ENCODE measurements at regions of chr16 and their contacts with region 1.

Region 1: GRCh38 chr16:3029537-3030402 is 5.9 kb downstream of the THOC6 start:
- DNase-seq: no peak
- ATAC-seq: no peak
- H3K4me3 Mint-ChIP-seq: no peak overlapping the region
- H3K27ac Mint-ChIP-seq: no peak overlapping the region
- H3K4me1 Mint-ChIP-seq: peaks cover 22% of the 10 kb centered on the region
- H3K27me3 Mint-ChIP-seq: no peaks in the 10 kb centered on the region
- CTCF ChIP-seq: no peak

Region 2: DNA sequence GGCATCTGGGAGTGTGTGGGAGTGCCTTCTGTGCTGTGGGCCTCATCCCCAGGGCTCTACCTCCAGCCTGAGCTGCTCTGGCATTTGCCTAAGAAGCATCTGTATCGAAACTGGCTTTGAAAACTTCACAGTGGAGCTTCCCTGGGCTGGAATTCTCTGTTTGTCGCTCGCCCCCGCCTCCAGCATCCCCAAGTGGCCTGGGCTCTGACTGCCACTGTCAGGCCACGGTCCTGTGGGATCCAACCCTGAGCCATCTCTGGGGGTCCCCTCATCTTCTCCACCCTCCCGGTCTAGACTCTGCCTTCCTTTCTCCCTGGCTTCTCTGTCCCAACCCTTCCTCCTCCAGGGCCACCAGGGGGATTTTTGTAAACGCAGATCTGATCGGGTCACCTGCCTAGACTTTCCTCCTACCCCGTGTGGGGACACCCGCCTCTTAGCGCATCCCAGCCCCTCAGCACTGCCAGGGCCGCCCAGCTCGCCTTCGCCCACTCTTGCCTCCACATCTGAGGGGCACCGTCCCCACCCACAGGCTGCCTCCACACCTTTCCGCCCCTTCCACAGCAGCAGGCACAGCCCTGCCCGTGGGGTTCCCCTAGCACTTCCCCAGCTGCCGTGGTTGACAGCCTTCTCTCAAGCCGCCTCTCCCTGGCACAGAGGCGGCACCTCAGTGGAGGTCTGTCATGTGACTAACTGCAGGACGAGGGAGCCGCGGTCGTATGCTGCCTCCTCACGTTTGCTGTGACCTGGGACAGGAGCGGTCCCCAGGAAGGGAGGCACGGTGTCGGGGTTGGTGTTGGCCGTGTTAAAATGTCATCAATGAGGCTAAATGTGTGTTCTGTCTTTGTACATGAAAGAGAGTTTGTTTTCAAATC is 542.9 kb before region 1 on chr16:
- CTCF ChIA-PET with region 1: no interaction called
- POLR2A ChIA-PET with region 1: no interaction called
- DNase-seq: no peak
- ATAC-seq: peak; percentile 15; the same call in 1 of the 2 replicates
- H3K4me3 Mint-ChIP-seq: no peak overlapping the region
- H3K27ac Mint-ChIP-seq: peak overlapping the region; percentile 54
- H3K4me1 Mint-ChIP-seq: 0 out of 2 replicates have a peak, but pooled peaks cover 4% of the 10 kb centered on the region
- H3K27me3 Mint-ChIP-seq: no peaks in the 10 kb centered on the region; the same call in 1 of the 2 replicates
- CTCF ChIP-seq: no peak

Region 3: GRCh38 chr16:2829501-2830356 is 200.0 kb before region 1 on chr16 and contains the start of gene ZG16B:
- CTCF ChIA-PET with region 1: no interaction called
- POLR2A ChIA-PET with region 1: no interaction called
- DNase-seq: no peak
- ATAC-seq: no peak
- H3K4me3 Mint-ChIP-seq: no peak within 1 kb of the TSS
- H3K27ac Mint-ChIP-seq: no peak within 1 kb of the TSS
- H3K4me1 Mint-ChIP-seq: no peaks in the 10 kb centered on the region
- H3K27me3 Mint-ChIP-seq: peaks cover 5% of the 10 kb centered on the region; the same call in 1 of the 2 replicates
- CTCF ChIP-seq: no peak
- total RNA-seq, gene ZG16B: not detected in 3 replicates

Region 4: GRCh38 chr16:2990891-2991290 is 38.9 kb before region 1 on chr16:
- CTCF ChIA-PET with region 1: interaction called, 15 read pairs
- POLR2A ChIA-PET with region 1: interaction called, 3 read pairs
- DNase-seq: no peak
- ATAC-seq: peak; percentile 32
- H3K4me3 Mint-ChIP-seq: no peak overlapping the region
- H3K27ac Mint-ChIP-seq: no peak overlapping the region
- H3K4me1 Mint-ChIP-seq: peaks cover 21% of the 10 kb centered on the region
- H3K27me3 Mint-ChIP-seq: no peaks in the 10 kb centered on the region
- CTCF ChIP-seq: no peak

Region 5: DNA sequence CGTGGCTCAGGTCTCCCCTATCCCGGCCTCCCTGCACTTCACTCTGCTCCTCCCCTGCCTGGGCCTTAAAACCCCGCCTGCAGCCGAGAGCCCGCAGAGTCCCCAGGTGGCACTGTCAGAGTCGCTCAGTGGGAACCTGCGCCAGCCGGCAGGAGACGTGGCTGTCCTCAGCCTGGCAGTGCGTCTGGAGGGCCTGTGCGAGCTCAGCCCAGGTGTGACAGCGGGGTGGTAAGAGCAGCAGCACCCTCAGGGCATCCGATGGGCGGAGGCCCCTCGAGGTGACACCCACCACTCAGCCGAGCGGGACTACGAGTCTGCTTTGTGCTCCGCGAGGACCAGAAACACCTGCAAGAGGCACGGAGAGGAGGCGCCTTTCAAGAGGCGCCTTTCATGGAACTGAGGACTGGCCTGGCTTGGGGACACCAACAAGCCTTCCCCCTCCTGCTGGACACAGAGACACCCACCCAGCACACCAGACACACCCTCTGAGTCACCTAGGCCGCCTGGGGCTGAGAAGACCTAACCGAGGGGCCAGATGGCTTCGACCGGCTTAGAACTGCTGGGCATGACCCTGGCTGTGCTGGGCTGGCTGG is 16.8 kb before region 1 on chr16 and contains the start of gene CLDN9:
- CTCF ChIA-PET with region 1: interaction called, 360 read pairs
- POLR2A ChIA-PET with region 1: interaction called, 502 read pairs
- DNase-seq: peak; percentile 69
- ATAC-seq: peak; percentile 1; the same call in 1 of the 2 replicates
- H3K4me3 Mint-ChIP-seq: peak within 1 kb of the TSS; percentile 70
- H3K27ac Mint-ChIP-seq: peak within 1 kb of the TSS; percentile 69
- H3K4me1 Mint-ChIP-seq: peaks cover 72% of the 10 kb centered on the region
- H3K27me3 Mint-ChIP-seq: peaks cover 3% of the 10 kb centered on the region; the same call in 1 of the 2 replicates
- CTCF ChIP-seq: no peak
- total RNA-seq, gene CLDN9: 0.87 to 1.1 TPM (median 0.92 TPM) in 3 replicates

Region 6: GRCh38 chr16:3074860-3075522 is 45.2 kb after region 1 on chr16:
- CTCF ChIA-PET with region 1: interaction called, 13 read pairs
- POLR2A ChIA-PET with region 1: no interaction called
- DNase-seq: no peak
- ATAC-seq: no peak
- H3K4me3 Mint-ChIP-seq: no peak overlapping the region
- H3K27ac Mint-ChIP-seq: no peak overlapping the region
- H3K4me1 Mint-ChIP-seq: peaks cover 57% of the 10 kb centered on the region
- H3K27me3 Mint-ChIP-seq: peaks cover 12% of the 10 kb centered on the region
- CTCF ChIP-seq: no peak

Region 7: GRCh38 chr16:3150346-3151218 is 120.8 kb after region 1 on chr16:
- CTCF ChIA-PET with region 1: interaction called, 14 read pairs
- POLR2A ChIA-PET with region 1: no interaction called
- DNase-seq: peak; percentile 98
- ATAC-seq: peak; percentile 78
- H3K4me3 Mint-ChIP-seq: peak overlapping the region; percentile 93
- H3K27ac Mint-ChIP-seq: peak overlapping the region; percentile 96
- H3K4me1 Mint-ChIP-seq: peaks cover 7% of the 10 kb centered on the region
- H3K27me3 Mint-ChIP-seq: peaks cover 37% of the 10 kb centered on the region
- CTCF ChIP-seq: no peak